Kidney (tissue), 22 donors: ENCODE measurements at regions of chr10 and their contacts with region 1.

Region 1: GRCh38 chr10:29304264-29305030 is 15.6 kb downstream of the LYZL1 start:
- DNase-seq: peak in 4 of 5 donors; percentile 74 to 92 (median 80)
- H3K4me3 ChIP-seq: no peak overlapping the region
- H3K27ac ChIP-seq: no peak overlapping the region
- H3K4me1 ChIP-seq: peaks cover 3 to 6% (median 5%) of the 10 kb centered on the region in 3 donors
- H3K27me3 ChIP-seq: no peaks in the 10 kb centered on the region
- CTCF ChIP-seq: peak; percentile 86

Region 2: GRCh38 chr10:28628184-28628893 is 676.1 kb before region 1 on chr10:
- intact Hi-C with region 1: loop called (anchors 10 kb)
- DNase-seq: peak; percentile 83 to 91 (median 86)
- H3K4me3 ChIP-seq: no peak overlapping the region
- H3K27ac ChIP-seq: no peak overlapping the region
- H3K4me1 ChIP-seq: no peaks in the 10 kb centered on the region
- H3K27me3 ChIP-seq: no peaks in the 10 kb centered on the region
- CTCF ChIP-seq: peak; percentile 85